ENCODE measurements at regions of chr2 and their contacts with region 1.

Region 1: GRCh38 chr2:62149708-62150107 is 46.2 kb upstream of the B3GNT2 start:
- DNase-seq: no peak

Region 2: DNA sequence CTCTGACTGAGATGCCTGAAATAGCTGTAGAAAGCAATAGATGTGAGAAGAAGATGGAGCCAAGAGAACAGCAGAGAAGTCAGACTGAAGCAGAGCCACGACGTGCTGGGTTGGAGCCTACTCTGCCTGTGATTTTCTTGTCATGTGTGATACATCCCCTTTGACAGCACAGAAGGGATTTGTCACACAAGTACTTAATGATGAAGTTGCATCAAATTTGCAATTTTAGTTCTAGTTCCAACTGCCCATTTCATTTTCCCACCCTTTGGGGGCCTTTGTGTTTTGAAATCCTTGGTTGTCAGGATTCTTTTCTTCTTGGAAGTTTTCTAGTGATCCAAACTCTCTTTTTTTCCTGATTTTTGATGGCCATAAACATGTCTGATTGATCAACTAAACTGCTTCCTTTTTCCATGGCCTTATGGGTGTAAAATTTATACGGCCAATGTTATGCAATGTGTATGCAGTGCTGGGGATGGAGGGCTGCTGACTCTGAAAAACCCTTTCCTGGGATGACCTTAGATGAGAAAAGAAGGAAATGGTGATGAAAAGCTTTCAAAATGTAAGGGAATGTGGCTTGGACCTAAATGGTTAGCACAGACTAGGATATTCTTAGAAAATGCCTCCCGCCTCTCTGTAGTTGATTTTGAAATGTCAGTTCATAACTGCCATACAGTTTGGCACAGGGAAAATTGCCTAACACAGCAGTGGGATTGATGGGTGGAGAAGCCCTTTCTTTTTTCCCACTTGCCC is 36.6 kb after region 1 on chr2:
- intact Hi-C with region 1: loop called (anchors 5 kb)
- DNase-seq: no peak

Region 3: GRCh38 chr2:62306751-62307468 is 157.2 kb after region 1 on chr2:
- intact Hi-C with region 1: no loop called
- DNase-seq: no peak